Spleen (tissue), 13 donors: ENCODE measurements at regions of chr12 and their contacts with region 1.

Region 1: GRCh38 chr12:113899561-113900471 is 66.3 kb downstream of the RBM19 start:
- DNase-seq: no peak
- H3K4me3 ChIP-seq: no peak overlapping the region
- H3K27ac ChIP-seq: no peak overlapping the region
- H3K4me1 ChIP-seq: no peaks in the 10 kb centered on the region
- H3K27me3 ChIP-seq: no peaks in the 10 kb centered on the region
- CTCF ChIP-seq: no peak
- POLR2A ChIP-seq: no peak

Region 2: GRCh38 chr12:113462117-113462774 is 437.6 kb before region 1 on chr12:
- intact Hi-C with region 1: loop called (anchors 10 kb)
- DNase-seq: peak; percentile 89
- H3K4me3 ChIP-seq: peak overlapping the region in 6 of 8 donors; percentile 21 to 64 (median 31)
- H3K27ac ChIP-seq: no peak overlapping the region
- H3K4me1 ChIP-seq: peaks cover 21 to 52% (median 43%) of the 10 kb centered on the region in 6 donors
- H3K27me3 ChIP-seq: peaks cover 4 to 100% (median 60%) of the 10 kb centered on the region in 7 donors
- CTCF ChIP-seq: peak; percentile 22 to 82 (median 73)
- POLR2A ChIP-seq: no peak